OCI-LY7 (cell line): ENCODE measurements at regions of chr2 and their contacts with region 1.

Region 1: GRCh38 chr2:152717228-152718075 is at the start of gene PRPF40A:
- DNase-seq: peak; percentile 98
- H3K4me3 ChIP-seq: peak within 1 kb of the TSS; percentile 76
- H3K27ac ChIP-seq: peak within 1 kb of the TSS; percentile 89
- H3K4me1 ChIP-seq: peaks cover 31% of the 10 kb centered on the region
- CTCF ChIP-seq: no peak
- total RNA-seq, gene PRPF40A: 156 and 198 TPM in 2 replicates

Region 2: GRCh38 chr2:151828143-151828889 is 889.1 kb before region 1 on chr2 and contains the start of gene ARL5A:
- CTCF ChIA-PET with region 1: no interaction called
- POLR2A ChIA-PET with region 1: interaction called, 3 read pairs
- intact Hi-C with region 1: loop called (anchors 5 kb)
- DNase-seq: peak; percentile 94
- H3K4me3 ChIP-seq: peak within 1 kb of the TSS; percentile 99
- H3K27ac ChIP-seq: peak within 1 kb of the TSS; percentile 57
- H3K4me1 ChIP-seq: peaks cover 34% of the 10 kb centered on the region
- CTCF ChIP-seq: no peak
- total RNA-seq, gene ARL5A: 91.4 and 107 TPM in 2 replicates

Region 3: DNA sequence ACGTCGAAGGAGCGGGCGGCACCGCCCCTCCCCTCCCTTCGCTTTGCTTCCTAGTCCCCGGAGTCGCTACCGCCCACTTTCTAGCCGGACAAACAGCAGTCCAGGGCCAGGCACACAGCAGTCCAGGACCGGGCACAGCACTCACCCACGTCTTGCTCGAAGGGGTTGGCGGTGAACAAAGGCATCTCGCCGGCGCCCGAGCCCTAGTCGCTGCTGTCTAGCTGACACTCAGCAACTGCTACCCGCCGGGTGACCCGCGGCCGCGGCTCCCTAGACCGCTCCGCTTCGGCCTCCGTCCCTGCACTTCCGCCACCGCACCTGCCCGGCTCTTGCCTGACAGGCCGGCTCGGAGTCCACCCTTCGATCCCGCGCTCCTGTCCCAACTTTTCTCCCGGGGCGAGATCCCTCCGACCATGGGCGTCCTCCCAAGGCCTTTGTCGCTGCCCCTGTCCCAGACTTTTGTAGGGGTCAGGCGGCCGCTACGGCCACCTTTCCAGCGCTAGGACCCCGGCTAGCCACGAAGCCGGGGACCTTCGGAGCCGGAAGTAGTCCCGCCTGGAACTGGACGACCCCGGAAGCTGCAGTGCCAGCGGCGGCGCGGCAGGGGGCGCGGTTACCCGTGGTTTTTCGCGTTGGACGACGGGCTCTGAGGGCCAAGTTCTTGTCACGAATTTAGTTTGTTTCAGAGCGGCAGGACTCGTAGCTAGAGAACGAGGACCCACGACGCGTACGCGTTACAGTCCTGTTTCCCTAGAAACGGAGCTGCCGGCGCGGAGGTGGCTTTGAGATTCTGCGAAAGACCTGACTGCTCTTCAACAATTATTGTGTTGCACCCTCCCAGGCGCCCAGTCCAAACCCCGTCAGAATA is 541.8 kb before region 1 on chr2 and contains the start of gene STAM2:
- CTCF ChIA-PET with region 1: interaction called, 4 read pairs
- POLR2A ChIA-PET with region 1: no interaction called
- intact Hi-C with region 1: loop called (anchors 1 kb)
- DNase-seq: peak; percentile 91
- H3K4me3 ChIP-seq: peak within 1 kb of the TSS; percentile 96
- H3K27ac ChIP-seq: peak within 1 kb of the TSS; percentile 67
- H3K4me1 ChIP-seq: peaks cover 16% of the 10 kb centered on the region
- CTCF ChIP-seq: peak; percentile 84
- total RNA-seq, gene STAM2: 17.7 and 19.6 TPM in 2 replicates

Region 4: DNA sequence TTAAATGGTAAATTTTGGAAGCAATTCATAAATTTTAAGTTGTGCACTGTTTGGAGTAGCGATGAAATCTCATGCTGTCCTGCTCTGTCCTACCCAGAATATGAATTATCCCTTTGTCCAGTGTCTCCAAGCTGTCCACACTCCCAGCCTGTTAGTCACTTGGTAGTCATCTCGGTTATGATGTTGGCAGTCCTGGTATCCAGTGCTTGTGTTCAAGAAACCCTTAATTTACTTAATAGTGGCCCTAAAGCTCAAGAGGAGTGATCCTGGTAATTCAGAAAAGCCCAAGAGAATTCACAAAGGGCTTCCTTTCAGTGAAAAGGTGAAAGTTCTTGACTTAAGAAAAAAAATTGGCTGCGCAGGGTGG is 470.1 kb before region 1 on chr2:
- CTCF ChIA-PET with region 1: no interaction called
- POLR2A ChIA-PET with region 1: no interaction called
- intact Hi-C with region 1: no loop called
- DNase-seq: no peak
- H3K4me3 ChIP-seq: no peak overlapping the region
- H3K27ac ChIP-seq: no peak overlapping the region
- H3K4me1 ChIP-seq: no peaks in the 10 kb centered on the region
- CTCF ChIP-seq: no peak

Region 5: DNA sequence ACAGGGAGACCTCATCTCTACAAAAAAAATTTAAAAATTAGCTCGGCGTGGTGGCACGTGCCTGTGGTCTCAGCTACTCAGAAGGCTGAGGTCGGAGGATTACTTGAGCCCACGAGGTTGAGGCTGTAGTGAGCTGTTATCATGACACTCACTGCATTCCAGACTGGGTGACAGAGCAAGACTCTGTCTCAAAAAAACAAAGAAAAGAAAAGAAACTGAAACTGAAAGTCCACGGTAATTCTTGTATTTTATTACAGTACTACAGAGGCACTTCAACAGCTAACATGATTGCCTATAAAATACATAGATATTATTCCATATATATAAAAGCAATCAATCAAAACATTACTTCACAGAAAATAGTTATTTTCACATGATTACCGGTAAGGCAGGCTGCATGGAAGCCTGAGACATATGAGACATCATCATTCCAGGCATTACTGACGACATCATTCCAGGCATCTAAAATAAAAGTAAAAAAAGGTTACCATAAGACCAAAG is 23.2 kb before region 1 on chr2:
- CTCF ChIA-PET with region 1: no interaction called
- POLR2A ChIA-PET with region 1: interaction called, 11 read pairs
- intact Hi-C with region 1: no loop called
- DNase-seq: peak; percentile 3
- H3K4me3 ChIP-seq: no peak overlapping the region
- H3K27ac ChIP-seq: no peak overlapping the region
- H3K4me1 ChIP-seq: peaks cover 10% of the 10 kb centered on the region
- CTCF ChIP-seq: no peak

Region 6: GRCh38 chr2:152706477-152707020 is 10.9 kb before region 1 on chr2:
- CTCF ChIA-PET with region 1: interaction called, 4 read pairs
- POLR2A ChIA-PET with region 1: interaction called, 45 read pairs
- intact Hi-C with region 1: no loop called
- DNase-seq: no peak
- H3K4me3 ChIP-seq: no peak overlapping the region
- H3K27ac ChIP-seq: no peak overlapping the region
- H3K4me1 ChIP-seq: no peaks in the 10 kb centered on the region
- CTCF ChIP-seq: no peak

Region 7: GRCh38 chr2:152730591-152731303 is 13.3 kb after region 1 on chr2:
- CTCF ChIA-PET with region 1: interaction called, 3 read pairs
- POLR2A ChIA-PET with region 1: interaction called, 12 read pairs
- intact Hi-C with region 1: no loop called
- DNase-seq: peak; percentile 9
- H3K4me3 ChIP-seq: no peak overlapping the region
- H3K27ac ChIP-seq: no peak overlapping the region
- H3K4me1 ChIP-seq: peaks cover 23% of the 10 kb centered on the region
- CTCF ChIP-seq: no peak

Region 8: GRCh38 chr2:152826581-152827279 is 109.3 kb after region 1 on chr2:
- CTCF ChIA-PET with region 1: interaction called, 12 read pairs
- POLR2A ChIA-PET with region 1: interaction called, 3 read pairs
- intact Hi-C with region 1: no loop called
- DNase-seq: peak; percentile 82
- H3K4me3 ChIP-seq: peak overlapping the region; percentile 2
- H3K27ac ChIP-seq: peak overlapping the region; percentile 55
- H3K4me1 ChIP-seq: peaks cover 14% of the 10 kb centered on the region
- CTCF ChIP-seq: no peak